Esophagus muscularis mucosa (tissue), 4 donors: ENCODE measurements at regions of chr3 and their contacts with region 1.

Region 1: GRCh38 chr3:161274719-161275298 is 53.7 kb downstream of the NMD3 start:
- DNase-seq: no peak
- H3K4me3 ChIP-seq: no peak overlapping the region
- H3K27ac ChIP-seq: no peak overlapping the region
- H3K4me1 ChIP-seq: no peaks in the 10 kb centered on the region
- H3K27me3 ChIP-seq: no peaks in the 10 kb centered on the region
- CTCF ChIP-seq: peak; percentile 10 to 42 (median 29)
- EP300 ChIP-seq: no peak
- POLR2A ChIP-seq: no peak

Region 2: DNA sequence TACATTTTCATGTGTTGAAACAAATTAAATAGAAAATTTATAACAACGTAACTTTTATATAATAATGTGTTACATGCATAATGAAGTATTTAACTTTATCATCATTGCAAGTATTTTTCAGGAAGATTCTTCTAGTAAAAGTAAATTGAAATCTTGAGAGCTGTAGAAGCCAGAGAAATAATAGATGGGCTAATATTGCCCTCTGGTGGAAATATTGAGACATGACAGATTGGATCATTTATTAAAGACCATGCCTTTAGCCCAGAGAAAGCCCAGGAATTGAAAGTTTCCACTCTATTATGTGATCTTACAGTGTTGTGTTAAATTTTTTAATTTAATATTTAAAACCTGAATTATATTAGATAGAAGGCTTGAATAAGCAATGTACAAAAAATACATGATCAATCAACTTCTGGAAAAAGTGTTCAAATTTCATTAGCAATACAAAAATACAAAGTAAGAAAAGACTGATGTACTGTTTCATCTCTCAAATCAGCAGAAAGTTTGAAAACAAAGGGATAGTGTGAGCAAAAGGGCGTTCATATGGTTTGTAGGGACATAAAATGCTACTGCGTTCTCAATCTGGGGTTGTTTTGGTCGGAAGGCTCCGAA is 149.2 kb after region 1 on chr3:
- intact Hi-C with region 1: loop called (anchors 1 kb)
- DNase-seq: no peak
- H3K4me3 ChIP-seq: no peak overlapping the region
- H3K27ac ChIP-seq: no peak overlapping the region
- H3K4me1 ChIP-seq: peaks cover 0 to 6% (median 0%) of the 10 kb centered on the region in 4 donors
- H3K27me3 ChIP-seq: no peaks in the 10 kb centered on the region
- CTCF ChIP-seq: peak; percentile 78 to 83 (median 83)
- EP300 ChIP-seq: no peak
- POLR2A ChIP-seq: no peak